WTC11 (cell line): ENCODE measurements at regions of chr2 and their contacts with region 1.

Region 1: GRCh38 chr2:165529130-165529529 is 59.6 kb downstream of the CSRNP3 start:
- DNase-seq: no peak
- ATAC-seq: peak; percentile 87
- H3K4me3 Mint-ChIP-seq: no peak overlapping the region
- H3K27ac Mint-ChIP-seq: peak overlapping the region; percentile 45; the same call in 1 of the 2 replicates
- H3K4me1 Mint-ChIP-seq: peaks cover 11% of the 10 kb centered on the region
- H3K27me3 Mint-ChIP-seq: no peaks in the 10 kb centered on the region
- CTCF ChIP-seq: no peak

Region 2: GRCh38 chr2:166092889-166093288 is 563.8 kb after region 1 on chr2:
- CTCF ChIA-PET with region 1: no interaction called
- POLR2A ChIA-PET with region 1: interaction called, 11 read pairs
- DNase-seq: no peak
- ATAC-seq: no peak
- H3K4me3 Mint-ChIP-seq: no peak overlapping the region
- H3K27ac Mint-ChIP-seq: no peak overlapping the region
- H3K4me1 Mint-ChIP-seq: peaks cover 14% of the 10 kb centered on the region
- H3K27me3 Mint-ChIP-seq: no peaks in the 10 kb centered on the region
- CTCF ChIP-seq: no peak